Activated CD4-positive, alpha-beta T cell treated with anti-CD3 and anti-CD28 coated beads for 36 hours (primary cell): ENCODE measurements at regions of chr9 and their contacts with region 1.

Region 1: DNA sequence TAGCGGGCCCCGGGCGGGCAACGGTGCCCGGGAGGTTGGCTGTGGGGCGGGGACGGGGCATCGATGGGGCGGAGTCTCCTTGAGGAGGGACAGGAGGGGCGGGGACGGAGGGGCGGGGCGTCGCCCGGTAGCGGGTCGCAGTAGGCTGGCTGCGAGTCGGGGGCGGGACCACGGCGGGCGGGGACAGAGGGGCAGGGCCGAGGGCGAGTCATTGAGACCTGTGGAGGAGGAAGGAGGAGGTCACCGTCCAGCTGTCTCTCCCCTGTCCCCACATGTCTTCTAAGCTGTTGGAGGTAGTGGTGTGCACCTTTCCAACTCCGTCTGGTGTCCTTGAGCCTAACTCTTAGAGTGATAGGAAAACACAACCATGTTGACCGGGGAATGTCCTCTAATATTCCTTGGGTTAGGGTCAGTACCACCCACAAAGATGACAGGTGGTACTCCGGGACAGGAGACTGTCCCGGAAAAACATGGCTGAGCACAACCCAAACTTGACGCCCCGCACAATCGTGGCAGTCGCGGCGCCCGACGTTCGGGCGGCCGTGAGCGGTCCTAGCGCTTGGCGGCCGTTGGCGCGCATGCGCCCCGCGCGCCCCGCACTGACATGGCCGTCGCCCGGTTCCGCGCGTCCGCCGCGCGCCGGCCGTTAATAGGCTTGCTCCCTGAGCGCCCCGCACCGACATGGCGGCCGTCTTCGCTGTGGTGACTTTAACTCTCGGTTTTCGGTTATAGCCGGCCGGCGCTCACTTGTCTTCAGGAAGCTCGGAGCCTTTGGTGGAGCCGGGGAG is at the starts of genes CRAT and PTPA:
- DNase-seq: peak; percentile 99
- ATAC-seq: peak; percentile 90
- H3K4me3 Mint-ChIP-seq: peak within 1 kb of the TSS; percentile 93
- H3K27ac Mint-ChIP-seq: peak within 1 kb of the TSS; percentile 94
- H3K4me1 Mint-ChIP-seq: peaks cover 38% of the 10 kb centered on the region
- H3K27me3 Mint-ChIP-seq: no peaks in the 10 kb centered on the region
- total RNA-seq, gene CRAT: 13.2 to 18.9 TPM
- total RNA-seq, gene PTPA: 71.9 to 88.0 TPM

Region 2: GRCh38 chr9:128322404-128323211 is 788.3 kb before region 1 on chr9 and contains the starts of genes COQ4 and TRUB2:
- CTCF ChIA-PET with region 1: no interaction called
- POLR2A ChIA-PET with region 1: no interaction called
- intact Hi-C with region 1: loop called in 1 of 2 experiments (anchors 1 kb)
- DNase-seq: peak; percentile 96
- ATAC-seq: peak; percentile 90
- H3K4me3 Mint-ChIP-seq: peak within 1 kb of the TSS; percentile 87
- H3K27ac Mint-ChIP-seq: peak within 1 kb of the TSS; percentile 93
- H3K4me1 Mint-ChIP-seq: peaks cover 19% of the 10 kb centered on the region
- H3K27me3 Mint-ChIP-seq: no peaks in the 10 kb centered on the region
- total RNA-seq, gene COQ4: 32.1 to 38.8 TPM
- total RNA-seq, gene TRUB2: 29.5 to 37.5 TPM

Region 3: DNA sequence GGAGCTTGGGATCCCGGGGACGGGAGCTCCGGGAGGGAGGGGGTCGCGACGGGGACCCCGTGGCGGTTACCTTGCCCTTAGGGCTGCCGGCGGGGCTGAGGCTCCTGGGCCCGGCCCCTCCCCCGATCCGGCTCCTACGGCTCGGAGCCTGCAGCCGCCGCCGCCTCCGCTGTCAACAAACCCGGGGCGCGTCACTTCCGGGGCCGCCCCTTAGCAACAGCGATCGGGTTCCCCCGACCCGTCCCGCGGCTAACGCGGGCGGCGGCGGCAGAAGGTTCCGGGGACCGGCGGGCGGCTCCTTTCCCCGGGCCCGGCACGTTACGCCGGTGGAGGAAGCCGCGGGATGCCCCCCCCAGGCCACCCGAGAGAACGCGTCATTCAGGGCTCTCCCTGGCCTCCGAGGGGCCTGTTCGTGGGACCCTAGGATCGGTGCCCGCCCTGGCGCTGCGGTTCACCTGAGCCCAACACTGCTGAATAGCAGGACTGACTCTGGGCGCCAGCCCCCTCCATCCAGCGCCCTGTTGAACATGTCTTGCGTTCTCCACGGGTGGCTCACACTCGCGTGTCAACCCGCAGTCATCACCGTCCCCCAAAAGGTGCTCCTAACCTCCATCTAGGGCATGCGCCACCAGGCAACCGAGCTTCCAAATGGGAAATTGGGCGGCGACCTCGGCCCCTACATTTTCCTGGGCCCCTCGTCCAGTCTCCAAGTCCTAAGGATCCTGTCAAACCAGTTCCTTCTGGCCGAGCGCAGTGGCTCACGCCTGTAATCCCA is 339.0 kb before region 1 on chr9 and contains the start of gene ZER1:
- CTCF ChIA-PET with region 1: no interaction called
- POLR2A ChIA-PET with region 1: no interaction called
- intact Hi-C with region 1: loop called in 1 of 2 experiments (anchors 1 kb)
- DNase-seq: peak; percentile 97
- ATAC-seq: peak; percentile 94
- H3K4me3 Mint-ChIP-seq: peak within 1 kb of the TSS; percentile 82
- H3K27ac Mint-ChIP-seq: peak within 1 kb of the TSS; percentile 86
- H3K4me1 Mint-ChIP-seq: peaks cover 18% of the 10 kb centered on the region
- H3K27me3 Mint-ChIP-seq: no peaks in the 10 kb centered on the region
- total RNA-seq, gene ZER1: 17.1 to 19.3 TPM

Region 4: DNA sequence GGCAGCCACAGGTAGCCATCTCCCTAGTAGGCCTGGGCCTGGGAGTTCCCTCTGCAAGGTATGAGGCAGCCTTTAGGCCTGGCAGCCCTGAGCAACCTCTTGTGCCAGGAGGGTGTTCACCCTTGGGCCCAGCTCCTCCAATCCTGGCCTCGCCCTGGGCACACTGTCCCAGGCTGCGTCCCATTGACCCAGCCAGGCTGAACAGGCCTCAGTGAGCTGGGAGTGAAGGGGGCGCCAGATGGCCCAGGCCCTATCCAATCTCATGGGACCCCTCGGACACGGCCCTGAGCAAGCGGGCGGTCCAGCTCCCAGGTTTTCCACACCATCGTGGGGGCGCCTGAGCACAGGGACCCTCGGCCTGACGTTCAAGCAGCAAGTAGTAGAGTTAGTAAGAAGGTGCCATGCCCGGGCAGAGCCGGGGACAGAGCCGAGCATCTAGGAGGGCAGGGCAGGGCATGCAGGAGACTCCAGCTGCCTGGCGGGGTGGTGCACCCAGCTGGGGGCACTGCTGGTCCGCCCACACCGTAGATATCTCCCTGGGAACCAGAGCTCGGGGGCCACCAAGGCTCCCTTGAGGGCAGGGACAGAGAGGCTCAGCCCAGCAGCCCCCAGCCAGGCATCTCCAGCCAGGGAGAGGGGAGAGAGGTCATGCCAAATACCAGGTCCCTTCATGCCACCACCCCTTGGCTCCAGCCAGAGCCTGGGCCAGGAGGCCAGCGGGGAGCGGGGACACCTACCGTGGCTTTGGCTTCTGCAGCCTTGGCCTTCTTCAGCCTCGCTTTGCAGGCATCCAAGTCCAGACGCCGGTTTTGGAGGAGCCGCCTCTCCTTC is 97.0 kb before region 1 on chr9:
- CTCF ChIA-PET with region 1: no interaction called
- POLR2A ChIA-PET with region 1: no interaction called
- intact Hi-C with region 1: no loop called
- DNase-seq: no peak
- ATAC-seq: no peak
- H3K4me3 Mint-ChIP-seq: no peak overlapping the region
- H3K27ac Mint-ChIP-seq: no peak overlapping the region
- H3K4me1 Mint-ChIP-seq: no peaks in the 10 kb centered on the region
- H3K27me3 Mint-ChIP-seq: no peaks in the 10 kb centered on the region

Region 5: GRCh38 chr9:129028192-129028957 is 82.6 kb before region 1 on chr9 and contains the start of gene SH3GLB2:
- CTCF ChIA-PET with region 1: no interaction called
- POLR2A ChIA-PET with region 1: no interaction called
- intact Hi-C with region 1: loop called (anchors 1 kb)
- DNase-seq: peak; percentile 98
- ATAC-seq: peak; percentile 93
- H3K4me3 Mint-ChIP-seq: peak within 1 kb of the TSS; percentile 81
- H3K27ac Mint-ChIP-seq: peak within 1 kb of the TSS; percentile 52
- H3K4me1 Mint-ChIP-seq: peaks cover 17% of the 10 kb centered on the region
- H3K27me3 Mint-ChIP-seq: no peaks in the 10 kb centered on the region
- total RNA-seq, gene SH3GLB2: 49.1 to 53.7 TPM

Region 6: GRCh38 chr9:129131300-129132145 is 20.6 kb after region 1 on chr9:
- CTCF ChIA-PET with region 1: interaction called, 12 read pairs
- POLR2A ChIA-PET with region 1: no interaction called
- intact Hi-C with region 1: no loop called
- DNase-seq: peak; percentile 91
- ATAC-seq: peak; percentile 100
- H3K4me3 Mint-ChIP-seq: no peak overlapping the region
- H3K27ac Mint-ChIP-seq: no peak overlapping the region
- H3K4me1 Mint-ChIP-seq: peaks cover 6% of the 10 kb centered on the region
- H3K27me3 Mint-ChIP-seq: no peaks in the 10 kb centered on the region

Region 7: DNA sequence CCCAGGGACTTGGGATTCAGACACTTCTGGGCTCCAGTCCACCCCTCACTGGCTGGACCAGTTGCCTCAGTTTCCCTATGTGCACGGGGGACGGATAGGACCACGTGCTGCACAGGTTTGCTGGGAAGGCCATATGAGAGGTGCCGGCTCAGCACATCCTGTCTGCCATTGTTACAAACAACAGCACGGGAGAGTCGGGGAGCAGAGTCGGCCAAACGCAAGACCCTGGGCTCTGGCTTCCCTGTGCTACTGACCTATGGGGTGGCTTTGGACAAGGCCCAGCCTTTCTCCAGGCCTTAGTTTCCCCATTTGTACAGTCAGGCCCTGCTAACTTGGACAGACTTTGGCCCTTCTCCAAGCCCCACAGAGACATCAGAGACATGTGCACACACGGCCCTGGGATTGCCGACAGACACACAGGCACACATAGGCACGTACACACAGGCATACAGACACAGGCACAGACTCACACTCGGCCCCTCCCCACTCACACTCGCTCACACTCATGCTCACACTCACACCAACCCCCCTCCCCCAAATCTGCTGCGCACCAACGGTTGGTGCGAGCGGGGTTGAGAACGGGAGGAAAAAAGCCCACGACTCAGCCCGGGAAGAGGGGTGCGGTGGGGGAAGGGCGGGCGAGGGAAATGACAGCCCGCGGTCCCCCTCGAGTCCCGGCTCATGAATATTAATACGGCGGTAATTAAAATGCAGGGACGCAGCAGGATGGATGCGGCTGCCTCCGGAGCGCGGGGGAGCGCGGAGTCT is 376.9 kb after region 1 on chr9:
- CTCF ChIA-PET with region 1: no interaction called
- POLR2A ChIA-PET with region 1: interaction called, 3 read pairs
- intact Hi-C with region 1: loop called in 1 of 2 experiments (anchors 1 kb)
- DNase-seq: peak; percentile 76
- ATAC-seq: peak; percentile 34
- H3K4me3 Mint-ChIP-seq: peak overlapping the region; percentile 93
- H3K27ac Mint-ChIP-seq: peak overlapping the region; percentile 96
- H3K4me1 Mint-ChIP-seq: peaks cover 66% of the 10 kb centered on the region
- H3K27me3 Mint-ChIP-seq: no peaks in the 10 kb centered on the region

Region 8: GRCh38 chr9:129823935-129824601 is 713.1 kb after region 1 on chr9 and contains the start of gene TOR1A:
- CTCF ChIA-PET with region 1: no interaction called
- POLR2A ChIA-PET with region 1: no interaction called
- intact Hi-C with region 1: loop called in 1 of 2 experiments (anchors 1 kb)
- DNase-seq: peak; percentile 97
- ATAC-seq: peak; percentile 93
- H3K4me3 Mint-ChIP-seq: peak within 1 kb of the TSS; percentile 82
- H3K27ac Mint-ChIP-seq: peak within 1 kb of the TSS; percentile 63
- H3K4me1 Mint-ChIP-seq: peaks cover 14% of the 10 kb centered on the region
- H3K27me3 Mint-ChIP-seq: no peaks in the 10 kb centered on the region
- total RNA-seq, gene TOR1A: 34.9 to 39.7 TPM